Posterior vena cava (tissue), 2 donors: ENCODE measurements at regions of chr2 and their contacts with region 1.

Region 1: DNA sequence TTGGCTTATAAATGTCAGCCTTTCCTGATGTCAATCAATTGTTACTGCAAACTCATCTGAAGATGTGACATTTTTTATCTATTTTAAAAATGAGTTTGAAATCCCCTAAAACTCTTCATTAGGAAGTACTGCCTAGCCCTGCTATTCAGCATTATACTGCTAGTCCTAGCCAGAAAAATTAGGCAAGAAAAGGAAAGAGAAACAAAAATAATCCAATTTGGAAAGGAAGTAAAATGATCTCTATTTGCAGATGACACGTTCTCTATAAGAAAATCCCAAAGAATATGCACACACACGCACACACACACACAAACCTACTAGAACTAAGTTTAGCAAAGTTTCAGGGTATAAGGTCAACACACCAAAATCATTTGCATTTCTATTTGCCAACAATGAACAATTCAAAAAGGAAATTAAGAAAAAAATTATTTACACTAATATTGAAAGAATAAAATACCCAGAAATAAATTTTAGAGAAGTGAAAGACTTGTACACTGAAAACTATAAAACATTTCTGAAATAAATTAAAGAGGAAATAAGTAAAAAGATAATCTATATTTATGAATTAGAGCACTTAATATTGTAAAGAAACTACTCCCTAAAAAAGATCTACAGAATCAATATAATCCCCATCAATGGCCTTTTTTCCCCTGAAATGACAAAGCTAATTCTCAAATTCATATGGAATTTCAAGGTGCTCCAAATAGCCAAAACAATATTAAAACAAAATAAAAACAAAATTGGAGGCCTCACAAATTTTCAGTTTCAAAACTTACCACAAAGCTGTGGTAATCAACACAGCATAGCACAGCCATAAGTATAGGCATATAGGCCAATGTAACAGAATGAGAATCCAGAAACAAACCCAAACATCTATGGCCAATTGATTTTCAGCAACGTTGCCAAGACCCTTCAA is 433.7 kb upstream of the TRIB2 start:
- DNase-seq: no peak

Region 2: GRCh38 chr2:12302140-12302539 is 19.1 kb after region 1 on chr2:
- intact Hi-C with region 1: loop called in 1 of 2 experiments (anchors 1 kb)
- DNase-seq: no peak